Heart right ventricle (tissue), 16 donors: ENCODE measurements at regions of chr9 and their contacts with region 1.

Region 1: DNA sequence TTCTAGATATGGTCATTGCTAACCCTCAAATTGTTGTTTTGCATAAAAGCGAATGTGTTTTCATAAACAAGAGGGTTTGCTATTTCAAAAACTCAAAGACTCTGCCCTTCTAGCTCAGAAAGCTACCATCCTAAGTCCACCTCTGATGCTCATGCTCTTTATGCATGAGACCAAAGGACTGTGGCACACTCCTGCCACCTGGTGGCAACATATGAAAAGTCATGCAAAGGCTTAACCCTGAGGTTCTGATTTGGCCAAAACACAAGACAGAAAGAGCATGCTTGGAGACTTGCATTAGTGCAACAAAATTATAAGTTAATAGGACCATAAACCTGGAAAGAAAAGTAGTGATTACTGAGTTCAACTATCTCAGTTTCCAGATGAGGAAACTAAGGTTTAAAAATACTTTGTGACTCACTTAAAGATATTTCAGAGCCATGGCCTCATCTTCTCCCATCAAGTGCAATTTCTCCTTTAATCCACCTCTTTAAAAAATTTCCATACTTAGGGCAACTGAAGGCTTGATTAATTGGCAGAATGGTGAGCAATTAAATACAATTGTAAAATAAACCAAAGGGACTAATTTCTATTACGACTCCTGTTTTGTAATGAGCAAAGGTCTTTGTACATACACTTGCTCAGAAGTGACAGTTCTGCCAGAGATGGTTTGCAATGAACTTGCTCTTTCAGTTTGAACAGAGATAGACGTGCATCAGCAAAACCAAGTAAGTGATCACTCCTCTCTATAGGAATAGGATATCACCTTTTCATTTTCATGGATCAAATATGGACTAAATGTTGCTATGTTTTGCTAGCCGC is 110.7 kb upstream of the RAD23B start:
- DNase-seq: peak; percentile 60 to 72
- ATAC-seq: peak in 7 of 8 donors; percentile 52 to 72 (median 63)
- H3K4me3 ChIP-seq: no peak overlapping the region
- H3K27ac ChIP-seq: no peak overlapping the region
- H3K4me1 ChIP-seq: peaks cover 3 to 30% (median 24%) of the 10 kb centered on the region in 9 donors
- H3K27me3 ChIP-seq: no peaks in the 10 kb centered on the region
- CTCF ChIP-seq: peak; percentile 85 to 96 (median 92)

Region 2: GRCh38 chr9:105355781-105356180 is 1816.6 kb before region 1 on chr9:
- intact Hi-C with region 1: loop called in 1 of 10 experiments (anchors 5 kb)
- DNase-seq: no peak
- ATAC-seq: no peak
- H3K4me3 ChIP-seq: no peak overlapping the region
- H3K27ac ChIP-seq: no peak overlapping the region
- H3K4me1 ChIP-seq: no peaks in the 10 kb centered on the region
- H3K27me3 ChIP-seq: no peaks in the 10 kb centered on the region
- CTCF ChIP-seq: no peak

Region 3: DNA sequence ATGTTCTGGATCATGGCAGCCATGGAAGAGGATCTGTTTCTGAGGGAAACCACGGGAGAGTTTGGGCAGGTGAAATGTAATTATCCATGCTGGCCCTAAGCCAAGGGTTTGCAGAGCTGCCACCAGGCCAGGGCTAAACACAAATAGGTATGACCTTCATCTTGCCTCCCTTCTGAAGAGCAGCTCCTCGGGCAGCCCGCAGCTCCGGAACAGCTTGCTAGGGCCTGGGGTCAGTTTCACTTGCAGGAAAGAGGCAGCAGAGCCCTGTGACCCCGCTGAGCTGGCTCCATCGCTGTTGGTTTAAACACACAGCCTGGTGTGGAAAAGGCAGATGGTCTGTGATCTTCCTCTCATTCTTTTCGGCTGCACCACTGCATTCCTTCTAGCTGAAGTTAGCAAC is 1336.6 kb before region 1 on chr9:
- intact Hi-C with region 1: loop called in 4 of 10 experiments (anchors 5 to 10 kb)
- DNase-seq: no peak
- ATAC-seq: peak in 5 of 8 donors; percentile 37 to 59 (median 46)
- H3K4me3 ChIP-seq: no peak overlapping the region
- H3K27ac ChIP-seq: no peak overlapping the region
- H3K4me1 ChIP-seq: peaks cover 0 to 5% (median 0%) of the 10 kb centered on the region in 9 donors
- H3K27me3 ChIP-seq: no peaks in the 10 kb centered on the region
- CTCF ChIP-seq: no peak

Region 4: DNA sequence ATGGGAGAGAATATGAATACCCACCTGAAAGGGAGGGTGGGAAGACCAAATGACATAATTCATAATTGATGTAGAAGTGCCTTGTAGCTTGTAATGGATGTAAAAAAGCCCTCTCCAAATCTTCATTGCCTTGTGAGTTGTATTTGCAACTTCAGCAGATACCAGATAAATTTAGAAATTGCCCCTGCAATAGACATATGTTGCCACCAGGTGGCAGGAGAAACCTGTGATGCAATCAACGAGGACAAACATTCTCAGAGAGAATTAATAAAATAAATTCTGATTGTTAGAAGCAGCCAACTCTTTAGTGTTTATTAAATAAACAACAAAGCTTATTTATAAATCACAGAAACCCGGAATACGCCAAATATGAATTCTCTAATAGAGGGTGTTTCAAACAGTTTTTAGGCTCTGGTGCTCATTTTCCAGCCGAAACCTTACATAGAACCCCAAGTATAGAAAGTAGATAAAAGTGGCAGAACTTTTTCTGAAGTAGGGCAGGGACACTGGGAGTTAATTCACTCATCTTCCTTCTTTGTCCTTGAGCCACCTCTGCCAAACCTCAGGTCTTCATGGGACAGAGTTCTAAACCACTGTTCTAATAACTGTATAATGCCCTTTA is 1330.2 kb before region 1 on chr9:
- intact Hi-C with region 1: loop called in 4 of 10 experiments (anchors 5 to 10 kb)
- DNase-seq: no peak
- ATAC-seq: no peak
- H3K4me3 ChIP-seq: no peak overlapping the region
- H3K27ac ChIP-seq: no peak overlapping the region
- H3K4me1 ChIP-seq: no peaks in the 10 kb centered on the region
- H3K27me3 ChIP-seq: no peaks in the 10 kb centered on the region
- CTCF ChIP-seq: peak; percentile 29 to 77 (median 62)

Region 5: GRCh38 chr9:105901514-105902109 is 1270.8 kb before region 1 on chr9:
- intact Hi-C with region 1: loop called in 4 of 10 experiments (anchors 5 to 10 kb)
- DNase-seq: peak; percentile 13 to 29
- ATAC-seq: peak; percentile 76 to 97 (median 95)
- H3K4me3 ChIP-seq: no peak overlapping the region
- H3K27ac ChIP-seq: no peak overlapping the region
- H3K4me1 ChIP-seq: peaks cover 0 to 4% (median 0%) of the 10 kb centered on the region in 9 donors
- H3K27me3 ChIP-seq: no peaks in the 10 kb centered on the region
- CTCF ChIP-seq: peak; percentile 23 to 81 (median 77)

Region 6: DNA sequence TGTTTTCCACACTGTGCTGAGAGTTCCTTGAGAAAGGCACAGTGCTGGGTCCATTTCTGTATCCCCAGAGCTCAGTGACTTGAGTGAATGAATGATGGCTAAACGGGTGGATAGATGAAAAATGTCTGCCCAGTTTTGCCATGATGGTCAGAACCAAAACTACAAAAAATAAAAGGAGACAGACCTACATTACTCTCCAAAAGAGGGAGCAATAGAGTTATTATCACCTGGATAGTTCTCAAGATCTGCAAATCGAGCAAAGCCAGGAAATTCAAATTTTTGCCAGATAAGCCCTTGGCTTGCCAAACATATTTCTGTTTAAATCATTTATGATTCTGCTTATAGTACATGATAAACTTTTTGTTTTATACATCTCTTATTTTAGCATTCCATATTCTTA is 523.6 kb before region 1 on chr9:
- intact Hi-C with region 1: loop called in 1 of 10 experiments (anchors 10 kb)
- DNase-seq: no peak
- ATAC-seq: no peak
- H3K4me3 ChIP-seq: no peak overlapping the region
- H3K27ac ChIP-seq: no peak overlapping the region
- H3K4me1 ChIP-seq: no peaks in the 10 kb centered on the region
- H3K27me3 ChIP-seq: no peaks in the 10 kb centered on the region
- CTCF ChIP-seq: peak in 6 of 9 donors; percentile 31 to 49 (median 42)

Region 7: GRCh38 chr9:107309271-107309670 is 136.9 kb after region 1 on chr9:
- intact Hi-C with region 1: no loop called
- DNase-seq: no peak
- ATAC-seq: no peak
- H3K4me3 ChIP-seq: no peak overlapping the region
- H3K27ac ChIP-seq: no peak overlapping the region
- H3K4me1 ChIP-seq: peaks cover 0 to 21% (median 10%) of the 10 kb centered on the region in 9 donors
- H3K27me3 ChIP-seq: no peaks in the 10 kb centered on the region
- CTCF ChIP-seq: no peak